ENCODE measurements at regions of chr2 and their contacts with region 1.

Region 1: DNA sequence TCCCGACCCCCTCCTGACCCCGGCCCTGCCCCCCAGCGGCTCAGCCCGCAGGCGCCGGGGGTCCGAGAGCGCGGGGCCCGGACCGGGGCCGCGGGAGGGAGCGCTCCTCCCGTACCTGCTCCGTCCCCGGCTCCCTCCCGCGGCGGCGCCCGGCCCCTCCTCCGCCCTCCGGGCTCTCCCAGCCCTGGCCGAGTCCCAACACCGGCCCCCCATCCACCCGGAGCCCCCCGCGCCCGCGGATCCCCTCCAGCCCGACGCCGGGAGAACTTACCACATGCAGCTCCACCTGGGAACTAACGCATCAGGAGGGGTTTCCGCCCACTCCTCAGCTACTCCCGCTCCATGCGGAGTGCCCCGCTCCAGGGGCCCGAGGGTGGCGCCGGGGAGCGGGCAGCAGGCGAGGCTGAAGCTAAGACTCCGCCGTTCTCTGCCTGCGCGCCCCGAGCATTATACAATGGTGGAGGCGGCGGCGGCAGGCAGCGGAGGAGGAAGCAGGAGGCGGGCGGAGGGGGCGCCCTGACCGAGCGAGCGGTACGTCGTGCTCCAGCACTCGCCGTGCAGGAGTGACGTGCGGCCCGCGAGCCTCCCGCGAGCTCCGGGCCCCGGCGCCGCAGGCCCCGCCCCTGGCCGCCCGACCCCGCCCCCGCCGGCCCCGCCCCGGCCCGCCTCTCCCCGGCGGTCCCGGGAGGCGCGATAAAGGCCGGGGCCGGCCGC is at the start of gene SERTAD2:
- DNase-seq: peak; percentile 27 to 85
- H3K4me3 ChIP-seq: peak within 1 kb of the TSS; percentile 79 to 95 (median 85)
- H3K27ac ChIP-seq: peak within 1 kb of the TSS; percentile 73; the same call in 1 of the 2 replicates
- H3K4me1 ChIP-seq: peaks cover 3 to 14% (median 10%) of the 10 kb centered on the region in 4 experiments
- H3K27me3 ChIP-seq: peaks cover 2 to 21% (median 12%) of the 10 kb centered on the region in 4 experiments; a peak in 6 of 7 replicates
- CTCF ChIP-seq: no peak
- EP300 ChIP-seq: no peak
- POLR2A ChIP-seq: peak; percentile 40 to 78; a peak in 2 of 3 replicates
- RAD21 ChIP-seq: peak in 1 of 2 experiments; percentile 2; a peak in 1 of 4 replicates
- total RNA-seq, gene SERTAD2: 4.5 and 5.7 TPM in 2 replicates

Region 2: DNA sequence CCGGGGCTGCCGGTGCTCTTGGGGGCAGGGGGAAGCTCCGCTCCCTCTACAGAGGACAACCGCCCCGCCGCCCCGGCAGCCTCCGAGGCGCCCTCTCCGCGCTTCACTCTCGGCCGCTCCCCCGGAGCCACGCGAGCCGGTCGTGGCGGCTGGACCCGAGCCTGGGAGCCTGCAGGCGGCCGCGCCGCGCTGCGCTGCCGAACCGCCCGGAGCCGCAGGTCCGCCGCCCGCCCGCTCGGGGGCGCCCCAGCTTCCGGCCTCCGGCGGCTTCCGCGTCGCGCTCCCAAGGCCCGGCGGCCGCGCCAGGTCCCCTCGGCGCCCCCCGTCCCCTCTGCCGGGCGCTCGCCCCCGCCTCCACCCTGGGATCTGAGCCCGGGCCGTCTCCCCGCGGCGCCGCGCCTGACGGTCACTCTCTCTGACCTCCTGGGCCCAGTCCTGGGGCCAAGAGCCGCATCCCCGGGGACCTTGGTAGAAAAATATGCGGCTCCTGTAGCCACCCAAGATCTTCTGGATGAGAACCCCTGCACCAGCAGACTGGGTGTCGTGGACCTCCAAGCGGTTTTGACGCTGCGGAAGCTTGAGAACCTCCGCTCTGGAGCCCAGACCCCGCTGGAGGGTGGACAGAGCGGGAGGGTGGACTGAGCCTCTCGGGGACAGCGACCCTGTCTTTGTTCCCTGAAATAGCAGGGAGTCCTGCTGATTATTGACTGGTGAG is 44.1 kb before region 1 on chr2:
- CTCF ChIA-PET with region 1: interaction called, 389 read pairs
- POLR2A ChIA-PET with region 1: interaction called, 4 read pairs
- DNase-seq: peak in 1 of 2 experiments; percentile 81
- H3K4me3 ChIP-seq: peak overlapping the region; percentile 54 to 79 (median 64)
- H3K27ac ChIP-seq: no peak overlapping the region
- H3K4me1 ChIP-seq: peaks cover 2 to 14% (median 6%) of the 10 kb centered on the region in 4 experiments
- H3K27me3 ChIP-seq: peaks cover 0 to 11% (median 9%) of the 10 kb centered on the region in 4 experiments; a peak in 6 of 7 replicates
- CTCF ChIP-seq: peak; percentile 58 to 76 (median 68)
- EP300 ChIP-seq: no peak
- POLR2A ChIP-seq: peak in 1 of 2 experiments; percentile 38; a peak in 1 of 3 replicates
- RAD21 ChIP-seq: peak in 1 of 2 experiments; percentile 49; a peak in 2 of 4 replicates

Region 3: DNA sequence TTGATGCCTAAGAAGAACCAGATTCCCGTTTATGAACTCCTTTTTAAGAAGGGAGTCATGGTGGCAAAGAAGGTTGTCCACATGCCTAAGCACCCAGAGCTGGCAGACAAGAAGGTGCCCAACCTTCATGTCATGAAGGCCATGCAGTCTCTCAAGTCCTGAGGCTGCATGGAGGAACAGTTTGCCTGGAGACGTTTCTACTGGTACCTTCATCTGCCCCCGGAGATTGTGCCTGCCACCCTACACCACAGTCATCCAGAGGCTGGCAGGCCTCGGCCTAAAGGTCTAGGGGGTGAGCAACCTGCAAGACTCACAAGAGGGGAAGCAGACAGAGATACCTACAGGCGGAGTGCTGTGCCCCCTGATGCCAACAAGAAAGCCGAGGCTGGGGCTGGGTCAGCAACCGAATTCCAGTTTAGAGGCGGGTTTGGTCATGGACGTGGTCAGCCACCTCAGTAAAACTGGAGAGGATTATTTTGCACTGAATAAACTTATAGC is 12.2 kb after region 1 on chr2:
- CTCF ChIA-PET with region 1: interaction called, 9 read pairs
- POLR2A ChIA-PET with region 1: interaction called, 21 read pairs
- DNase-seq: no peak
- H3K4me3 ChIP-seq: no peak overlapping the region
- H3K27ac ChIP-seq: no peak overlapping the region
- H3K4me1 ChIP-seq: peaks cover 0 to 8% (median 3%) of the 10 kb centered on the region in 4 experiments; a peak in 4 of 7 replicates
- H3K27me3 ChIP-seq: peaks cover 0 to 4% (median under 1%) of the 10 kb centered on the region in 4 experiments; a peak in 2 of 7 replicates
- CTCF ChIP-seq: no peak
- EP300 ChIP-seq: no peak
- POLR2A ChIP-seq: no peak
- RAD21 ChIP-seq: no peak

Region 4: DNA sequence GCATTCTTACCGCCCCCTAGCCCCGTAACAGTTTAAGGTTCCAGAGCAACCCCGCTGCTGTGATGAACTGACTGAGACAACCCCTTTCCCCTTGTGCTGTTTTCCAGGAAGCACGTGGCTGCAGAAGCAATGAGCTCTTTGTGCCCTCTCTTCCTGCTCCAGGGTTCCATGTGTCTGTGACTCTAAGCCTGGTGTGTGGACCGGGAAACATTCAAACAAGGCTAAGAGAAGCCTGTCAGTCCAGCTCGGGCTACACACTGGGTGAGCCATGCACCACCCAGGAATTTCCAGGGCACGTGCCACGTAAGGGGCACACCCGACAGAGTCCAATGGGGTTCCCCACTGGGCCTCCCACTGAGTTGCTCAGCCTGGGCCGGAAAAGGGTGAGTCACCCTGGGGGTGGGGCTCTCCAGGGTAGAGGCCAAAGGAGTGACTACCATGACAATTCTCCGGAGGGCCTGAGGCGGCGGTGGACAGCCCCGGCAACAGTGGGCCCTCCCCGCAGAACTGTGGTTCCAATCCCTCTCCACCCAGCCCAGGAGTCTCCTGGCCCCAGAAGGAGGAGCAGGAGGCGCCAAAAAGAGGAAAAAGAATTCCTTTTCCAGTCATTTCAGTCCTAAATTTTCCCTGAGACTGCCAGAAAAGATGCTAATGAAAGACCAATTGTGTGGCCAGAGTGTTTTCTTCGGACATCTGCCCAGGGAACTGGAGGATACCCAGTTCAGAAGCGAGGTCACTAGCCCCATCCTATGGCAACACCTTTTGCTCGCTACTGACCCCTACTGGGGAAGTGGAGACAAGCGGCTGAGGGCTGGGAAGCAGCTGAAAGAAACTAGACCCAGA is 177.8 kb after region 1 on chr2:
- CTCF ChIA-PET with region 1: interaction called, 38 read pairs
- POLR2A ChIA-PET with region 1: interaction called, 4 read pairs
- DNase-seq: peak in 1 of 2 experiments; percentile 94
- H3K4me3 ChIP-seq: no peak overlapping the region
- H3K27ac ChIP-seq: no peak overlapping the region
- H3K4me1 ChIP-seq: peaks cover 0 to 5% (median 3%) of the 10 kb centered on the region in 4 experiments; a peak in 3 of 7 replicates
- H3K27me3 ChIP-seq: no peaks in the 10 kb centered on the region
- CTCF ChIP-seq: peak; percentile 83 to 98 (median 92)
- EP300 ChIP-seq: no peak
- POLR2A ChIP-seq: no peak
- RAD21 ChIP-seq: peak; percentile 63 to 72

Region 5: DNA sequence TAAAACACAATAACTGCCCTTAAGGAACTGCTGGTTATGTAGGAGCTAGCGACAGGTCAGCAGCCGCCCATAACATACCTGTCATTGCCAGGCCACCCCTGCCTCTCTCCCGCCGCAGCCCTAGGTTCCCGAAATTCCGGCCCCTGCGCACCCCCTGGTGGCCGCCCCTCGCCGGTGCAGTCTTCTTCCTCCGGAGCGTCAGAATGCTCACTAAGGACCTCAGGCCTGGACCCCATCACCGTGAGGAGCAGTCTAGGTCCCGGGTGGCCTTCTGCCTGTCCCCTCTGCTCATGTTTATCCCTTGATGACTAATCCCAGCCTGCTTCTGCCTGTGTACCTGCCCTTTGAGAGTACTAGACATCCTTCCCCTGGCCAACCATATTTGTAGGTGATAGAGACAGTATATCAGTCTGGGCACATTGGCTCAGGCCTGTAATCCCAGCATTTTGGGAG is 220.0 kb after region 1 on chr2:
- CTCF ChIA-PET with region 1: interaction called, 22 read pairs
- POLR2A ChIA-PET with region 1: interaction called, 3 read pairs
- DNase-seq: peak in 1 of 2 experiments; percentile 99
- H3K4me3 ChIP-seq: no peak overlapping the region
- H3K27ac ChIP-seq: no peak overlapping the region
- H3K4me1 ChIP-seq: peaks cover 3 to 8% (median 4%) of the 10 kb centered on the region in 4 experiments; a peak in 4 of 7 replicates
- H3K27me3 ChIP-seq: no peaks in the 10 kb centered on the region; a peak in 1 of 7 replicates
- CTCF ChIP-seq: peak; percentile 92 to 95 (median 95)
- EP300 ChIP-seq: no peak
- POLR2A ChIP-seq: no peak
- RAD21 ChIP-seq: peak; percentile 90 to 94